ENCODE measurements at regions of chr4 and their contacts with region 1.

Region 1: GRCh38 chr4:37802068-37802666 is 24.3 kb upstream of the PGM2 start:
- DNase-seq: peak; percentile 64
- H3K27ac ChIP-seq: no peak overlapping the region
- CTCF ChIP-seq: peak; percentile 79

Region 2: DNA sequence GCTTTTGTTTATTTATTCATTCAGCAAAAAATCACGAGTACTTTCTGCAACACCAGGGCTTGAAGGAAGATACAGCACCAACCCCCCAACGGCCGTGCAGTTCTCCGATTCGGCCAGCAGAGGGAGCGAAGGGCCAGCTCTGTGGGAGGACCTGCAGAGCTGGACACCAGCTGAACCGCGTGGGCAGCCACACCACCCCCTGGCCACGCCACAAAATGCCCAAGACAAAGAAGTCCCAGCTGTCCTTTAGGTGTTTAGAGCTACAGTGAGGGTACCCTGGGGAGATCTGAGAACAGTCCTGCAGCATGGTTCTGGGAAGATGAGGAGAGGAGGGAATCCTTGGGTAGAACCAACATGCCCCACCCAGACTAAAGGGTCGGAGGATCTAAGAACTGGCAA is 199.1 kb before region 1 on chr4:
- CTCF ChIA-PET with region 1: interaction called, 29 read pairs
- POLR2A ChIA-PET with region 1: no interaction called
- DNase-seq: peak; percentile 80
- H3K27ac ChIP-seq: no peak overlapping the region
- CTCF ChIP-seq: peak; percentile 95

Region 3: GRCh38 chr4:37666625-37667071 is 135.5 kb before region 1 on chr4:
- CTCF ChIA-PET with region 1: no interaction called
- POLR2A ChIA-PET with region 1: no interaction called
- DNase-seq: peak; percentile 82
- H3K27ac ChIP-seq: peak overlapping the region; percentile 81
- CTCF ChIP-seq: no peak

Region 4: GRCh38 chr4:38034986-38035882 is 233.1 kb after region 1 on chr4:
- CTCF ChIA-PET with region 1: interaction called, 12 read pairs
- POLR2A ChIA-PET with region 1: no interaction called
- DNase-seq: peak; percentile 52
- H3K27ac ChIP-seq: no peak overlapping the region
- CTCF ChIP-seq: peak; percentile 76

Measured in RWPE1 (cell line).